ENCODE measurements at regions of chr17 and their contacts with region 1.

Region 1: GRCh38 chr17:48335858-48336500 is 94.0 kb downstream of the SKAP1 start:
- DNase-seq: peak in 7 of 9 donors; percentile 27 to 70 (median 63)
- ATAC-seq: peak; percentile 77
- H3K4me3 ChIP-seq: no peak overlapping the region
- H3K4me3 Mint-ChIP-seq: no peak overlapping the region
- H3K27ac ChIP-seq: no peak overlapping the region
- H3K27ac Mint-ChIP-seq: peak overlapping the region in 1 of 9 donors; percentile 15
- H3K4me1 ChIP-seq: peaks cover 0 to 3% of the 10 kb centered on the region in 2 donors
- H3K4me1 Mint-ChIP-seq: peaks cover 3 to 25% (median 12%) of the 10 kb centered on the region in 7 donors
- H3K27me3 ChIP-seq: no peaks in the 10 kb centered on the region
- H3K27me3 Mint-ChIP-seq: no peaks in the 10 kb centered on the region

Region 2: DNA sequence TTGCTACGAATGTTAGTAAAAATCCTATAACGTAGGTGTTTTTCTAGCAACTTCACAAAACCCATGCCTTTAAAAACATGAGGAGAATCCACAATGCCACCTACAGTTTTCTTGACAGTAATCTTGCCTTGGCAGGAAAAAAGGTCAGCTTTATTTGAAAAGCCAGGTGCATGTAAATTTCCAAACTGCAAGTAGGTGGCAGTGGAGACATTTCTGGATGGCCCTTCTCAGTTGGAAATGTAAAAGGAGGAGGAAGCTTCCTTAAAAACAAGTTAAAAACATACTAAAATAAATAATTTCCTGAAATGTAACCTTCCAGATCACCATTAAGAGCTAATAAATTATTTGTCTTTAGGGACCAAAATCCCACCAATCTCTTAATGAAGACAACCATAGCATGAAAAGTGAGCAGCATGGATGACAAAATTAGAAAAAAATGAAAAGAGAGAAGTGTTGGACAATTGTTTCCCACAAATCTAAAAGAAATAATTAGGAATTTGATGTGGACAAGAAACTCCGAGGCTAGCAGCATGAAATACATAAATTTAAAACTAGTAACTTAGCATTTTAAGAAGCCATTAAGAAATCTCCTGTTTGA is 76.2 kb before region 1 on chr17:
- CTCF ChIA-PET with region 1: interaction called, 10 read pairs
- POLR2A ChIA-PET with region 1: no interaction called
- intact Hi-C with region 1: no loop called
- DNase-seq: no peak
- ATAC-seq: no peak
- H3K4me3 ChIP-seq: no peak overlapping the region
- H3K4me3 Mint-ChIP-seq: no peak overlapping the region
- H3K27ac ChIP-seq: no peak overlapping the region
- H3K27ac Mint-ChIP-seq: no peak overlapping the region
- H3K4me1 ChIP-seq: no peaks in the 10 kb centered on the region
- H3K4me1 Mint-ChIP-seq: peaks cover 4 to 29% (median 10%) of the 10 kb centered on the region in 7 donors
- H3K27me3 ChIP-seq: no peaks in the 10 kb centered on the region
- H3K27me3 Mint-ChIP-seq: no peaks in the 10 kb centered on the region

Region 3: DNA sequence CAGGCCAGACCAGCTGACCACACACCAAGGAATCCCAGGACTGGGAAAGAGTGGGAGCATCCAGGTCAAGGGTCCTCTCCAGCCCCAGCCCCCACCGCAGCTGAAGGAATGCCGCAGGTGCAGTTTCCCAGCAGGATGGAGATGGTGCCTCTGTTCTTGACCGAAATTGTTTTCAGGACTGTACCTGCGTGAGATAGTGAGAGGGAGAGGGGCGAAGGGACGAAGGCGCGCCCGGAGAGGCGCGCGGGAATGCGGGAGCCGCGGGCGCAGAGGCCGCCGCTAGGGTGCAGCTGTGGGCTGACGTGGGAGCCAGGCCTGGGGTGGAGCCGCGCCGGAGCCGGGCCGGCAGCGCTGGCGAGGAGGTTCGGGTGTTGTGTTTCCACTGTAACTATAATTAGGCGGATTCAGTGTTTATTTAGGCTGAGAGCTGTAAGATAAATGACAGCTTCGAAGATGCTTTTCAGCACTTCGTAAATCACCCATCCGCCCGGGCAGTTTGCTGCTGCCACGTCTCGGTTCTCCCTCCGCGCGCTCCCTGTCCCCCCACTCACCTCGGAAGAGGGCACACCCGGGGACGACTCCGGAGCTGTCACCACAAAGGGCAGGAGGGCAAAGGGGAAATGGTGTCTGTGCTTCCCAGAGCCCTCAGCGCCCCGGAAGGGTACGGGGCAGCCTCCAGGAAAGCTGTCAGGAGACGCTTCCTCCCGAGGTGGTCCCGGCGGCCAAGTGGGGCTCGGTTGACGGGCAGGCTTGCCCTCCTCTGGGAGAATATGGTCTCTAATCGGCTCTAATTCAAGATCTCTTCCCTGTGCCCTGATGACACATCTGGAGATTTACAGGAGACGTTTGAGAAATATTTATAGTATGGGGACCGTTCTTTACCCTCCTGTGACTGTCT is 156.7 kb after region 1 on chr17:
- CTCF ChIA-PET with region 1: interaction called, 7 read pairs
- POLR2A ChIA-PET with region 1: no interaction called
- intact Hi-C with region 1: loop called in 1 of 2 experiments (anchors 1 kb)
- DNase-seq: peak; percentile 38 to 73 (median 58)
- ATAC-seq: peak; percentile 95
- H3K4me3 ChIP-seq: peak overlapping the region; percentile 54
- H3K4me3 Mint-ChIP-seq: peak overlapping the region; percentile 6 to 79 (median 58)
- H3K27ac ChIP-seq: no peak overlapping the region
- H3K27ac Mint-ChIP-seq: peak overlapping the region in 1 of 9 donors; percentile 88
- H3K4me1 ChIP-seq: peaks cover 6 to 7% of the 10 kb centered on the region in 2 donors
- H3K4me1 Mint-ChIP-seq: peaks cover 0 to 58% (median 7%) of the 10 kb centered on the region in 7 donors
- H3K27me3 ChIP-seq: no peaks in the 10 kb centered on the region
- H3K27me3 Mint-ChIP-seq: peaks cover 6 to 26% (median 16%) of the 10 kb centered on the region in 5 donors

Region 4: DNA sequence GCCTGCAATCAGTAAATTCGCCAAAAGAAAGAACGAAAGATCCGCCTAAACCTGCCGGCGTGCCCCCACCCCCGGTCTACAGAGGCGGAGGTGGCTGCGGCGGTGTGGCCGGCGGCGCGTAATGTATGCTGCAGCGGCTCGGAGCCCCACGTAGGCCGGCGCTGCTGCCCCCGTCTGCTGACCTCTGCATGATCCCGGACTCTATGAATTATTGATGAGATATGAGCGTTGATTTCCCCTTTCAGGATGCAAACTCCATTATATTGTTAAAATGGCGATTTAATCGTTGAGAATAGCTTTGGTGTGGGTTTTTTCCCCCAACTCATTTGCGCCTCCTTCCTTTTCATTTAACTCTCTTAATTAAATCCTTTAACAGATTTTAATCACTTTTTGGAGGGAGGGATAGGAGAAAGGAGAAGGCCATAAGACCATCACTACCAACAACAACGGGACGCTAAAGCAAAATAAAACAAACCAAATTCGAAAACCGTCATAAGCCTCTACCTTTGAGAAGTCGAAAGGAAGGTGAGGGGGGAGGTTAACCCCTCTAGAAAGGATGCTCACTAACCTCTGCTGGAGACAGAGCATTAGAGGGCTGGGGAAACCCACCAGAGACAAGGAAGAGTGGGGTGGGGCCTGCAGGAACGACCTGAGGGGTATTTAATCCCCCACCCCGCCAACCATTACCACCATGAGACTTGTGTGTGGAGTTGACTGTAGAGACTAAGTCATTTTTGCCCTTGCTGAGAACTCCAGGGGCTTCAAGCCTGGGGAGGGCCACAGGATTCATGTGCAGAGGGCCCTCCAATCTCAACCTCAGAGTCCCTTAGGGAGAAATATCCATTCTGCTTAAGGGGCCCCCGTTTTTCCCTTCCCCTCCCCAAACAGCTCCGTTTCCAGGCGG is 250.6 kb after region 1 on chr17:
- CTCF ChIA-PET with region 1: interaction called, 10 read pairs
- POLR2A ChIA-PET with region 1: interaction called, 4 read pairs
- intact Hi-C with region 1: no loop called
- DNase-seq: no peak
- ATAC-seq: no peak
- H3K4me3 ChIP-seq: peak overlapping the region; percentile 60
- H3K4me3 Mint-ChIP-seq: peak overlapping the region; percentile 81 to 97 (median 91)
- H3K27ac ChIP-seq: no peak overlapping the region
- H3K27ac Mint-ChIP-seq: peak overlapping the region in 1 of 9 donors; percentile 52
- H3K4me1 ChIP-seq: peaks cover 9 to 25% of the 10 kb centered on the region in 2 donors
- H3K4me1 Mint-ChIP-seq: peaks cover 17 to 70% (median 31%) of the 10 kb centered on the region in 7 donors
- H3K27me3 ChIP-seq: peaks cover 8 to 37% of the 10 kb centered on the region in 2 donors
- H3K27me3 Mint-ChIP-seq: peaks cover 88 to 97% (median 95%) of the 10 kb centered on the region in 5 donors

Measured in naive thymus-derived CD4-positive, alpha-beta T cell (primary cell).